IMR-90 (cell line): ENCODE measurements at regions of chr16 and their contacts with region 1.

Region 1: DNA sequence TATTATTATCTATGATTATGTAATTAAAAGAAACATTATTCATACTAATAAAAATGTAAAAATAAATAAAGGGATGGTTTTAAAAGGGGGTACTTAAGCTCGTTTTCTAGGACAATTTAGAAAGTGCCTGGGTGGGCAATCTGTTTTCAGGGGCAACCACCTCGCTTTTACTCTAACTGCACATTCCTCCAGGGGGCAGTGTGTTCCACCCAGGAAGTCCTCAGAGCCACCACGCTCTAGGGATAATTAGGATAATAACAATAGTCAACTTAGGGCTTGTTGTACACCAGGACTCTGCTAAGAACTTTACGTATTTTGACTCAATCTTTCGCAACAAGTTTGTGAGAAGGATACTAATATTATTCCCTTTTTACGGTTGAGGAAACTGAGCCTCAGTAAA is 396.7 kb upstream of the MAF start:
- DNase-seq: peak; percentile 26
- ATAC-seq: no peak
- H3K4me3 ChIP-seq: no peak overlapping the region
- H3K27ac ChIP-seq: no peak overlapping the region
- H3K4me1 ChIP-seq: no peaks in the 10 kb centered on the region
- H3K27me3 ChIP-seq: no peaks in the 10 kb centered on the region
- CTCF ChIP-seq: peak; percentile 56
- POLR2A ChIP-seq: no peak
- RAD21 ChIP-seq: peak; percentile 71

Region 2: DNA sequence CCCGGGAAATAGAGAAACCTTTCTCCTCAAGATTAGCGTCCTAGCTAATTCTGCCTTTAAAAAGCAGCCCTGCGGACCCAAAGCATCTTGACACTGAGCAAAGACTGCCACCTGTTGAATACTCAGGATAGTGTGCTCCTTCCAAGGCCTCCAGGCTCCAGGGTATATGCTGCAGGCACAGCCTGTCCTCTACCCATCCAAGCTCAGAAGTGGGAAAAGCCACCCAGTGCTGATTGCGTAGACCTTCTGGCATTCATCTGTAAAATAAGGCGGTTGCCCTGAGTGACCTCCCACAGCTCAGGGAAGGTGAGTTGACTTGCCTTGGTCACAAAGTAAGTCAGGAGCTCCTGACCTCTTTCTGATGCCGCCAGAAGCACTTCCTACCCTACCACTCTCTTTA is 87.4 kb after region 1 on chr16:
- CTCF ChIA-PET with region 1: interaction called, 4 read pairs
- POLR2A ChIA-PET with region 1: no interaction called
- dilution Hi-C with region 1: no loop called
- in situ Hi-C with region 1: no loop called
- intact Hi-C with region 1: loop called (anchors 5 kb)
- DNase-seq: no peak
- ATAC-seq: no peak
- H3K4me3 ChIP-seq: no peak overlapping the region
- H3K27ac ChIP-seq: no peak overlapping the region
- H3K4me1 ChIP-seq: no peaks in the 10 kb centered on the region
- H3K27me3 ChIP-seq: no peaks in the 10 kb centered on the region
- CTCF ChIP-seq: peak; percentile 33
- POLR2A ChIP-seq: no peak
- RAD21 ChIP-seq: peak; percentile 53

Region 3: GRCh38 chr16:80369138-80369958 is 372.1 kb after region 1 on chr16:
- CTCF ChIA-PET with region 1: interaction called, 5 read pairs
- POLR2A ChIA-PET with region 1: no interaction called
- dilution Hi-C with region 1: no loop called
- in situ Hi-C with region 1: loop called (anchors 10 kb)
- intact Hi-C with region 1: loop called (anchors 1 kb)
- DNase-seq: peak; percentile 60
- ATAC-seq: peak; percentile 98
- H3K4me3 ChIP-seq: no peak overlapping the region
- H3K27ac ChIP-seq: no peak overlapping the region
- H3K4me1 ChIP-seq: no peaks in the 10 kb centered on the region
- H3K27me3 ChIP-seq: no peaks in the 10 kb centered on the region
- CTCF ChIP-seq: peak; percentile 86
- POLR2A ChIP-seq: 0 out of 2 replicates have a peak, but pooled peaks have one; percentile 24
- RAD21 ChIP-seq: peak; percentile 98

Region 4: GRCh38 chr16:80375973-80376372 is 378.7 kb after region 1 on chr16:
- CTCF ChIA-PET with region 1: interaction called, 3 read pairs
- POLR2A ChIA-PET with region 1: no interaction called
- dilution Hi-C with region 1: no loop called
- in situ Hi-C with region 1: loop called (anchors 10 kb)
- intact Hi-C with region 1: no loop called
- DNase-seq: no peak
- ATAC-seq: no peak
- H3K4me3 ChIP-seq: no peak overlapping the region
- H3K27ac ChIP-seq: no peak overlapping the region
- H3K4me1 ChIP-seq: no peaks in the 10 kb centered on the region
- H3K27me3 ChIP-seq: no peaks in the 10 kb centered on the region
- CTCF ChIP-seq: no peak
- POLR2A ChIP-seq: no peak
- RAD21 ChIP-seq: no peak

Region 5: GRCh38 chr16:80466024-80466987 is 469.0 kb after region 1 on chr16:
- CTCF ChIA-PET with region 1: no interaction called
- POLR2A ChIA-PET with region 1: no interaction called
- dilution Hi-C with region 1: no loop called
- in situ Hi-C with region 1: no loop called
- intact Hi-C with region 1: loop called (anchors 5 kb)
- DNase-seq: peak; percentile 24
- ATAC-seq: peak; percentile 65
- H3K4me3 ChIP-seq: no peak overlapping the region
- H3K27ac ChIP-seq: no peak overlapping the region
- H3K4me1 ChIP-seq: no peaks in the 10 kb centered on the region
- H3K27me3 ChIP-seq: no peaks in the 10 kb centered on the region
- CTCF ChIP-seq: peak; percentile 64
- POLR2A ChIP-seq: no peak
- RAD21 ChIP-seq: peak; percentile 77

Region 6: GRCh38 chr16:80526425-80527061 is 529.3 kb after region 1 on chr16:
- CTCF ChIA-PET with region 1: no interaction called
- POLR2A ChIA-PET with region 1: no interaction called
- dilution Hi-C with region 1: no loop called
- in situ Hi-C with region 1: no loop called
- intact Hi-C with region 1: loop called (anchors 2 kb)
- DNase-seq: peak; percentile 55
- ATAC-seq: peak; percentile 88
- H3K4me3 ChIP-seq: no peak overlapping the region
- H3K27ac ChIP-seq: no peak overlapping the region
- H3K4me1 ChIP-seq: no peaks in the 10 kb centered on the region
- H3K27me3 ChIP-seq: no peaks in the 10 kb centered on the region
- CTCF ChIP-seq: peak; percentile 82
- POLR2A ChIP-seq: no peak
- RAD21 ChIP-seq: peak; percentile 84